A549 (cell line): ENCODE measurements at regions of chr2 and their contacts with region 1.

Region 1: DNA sequence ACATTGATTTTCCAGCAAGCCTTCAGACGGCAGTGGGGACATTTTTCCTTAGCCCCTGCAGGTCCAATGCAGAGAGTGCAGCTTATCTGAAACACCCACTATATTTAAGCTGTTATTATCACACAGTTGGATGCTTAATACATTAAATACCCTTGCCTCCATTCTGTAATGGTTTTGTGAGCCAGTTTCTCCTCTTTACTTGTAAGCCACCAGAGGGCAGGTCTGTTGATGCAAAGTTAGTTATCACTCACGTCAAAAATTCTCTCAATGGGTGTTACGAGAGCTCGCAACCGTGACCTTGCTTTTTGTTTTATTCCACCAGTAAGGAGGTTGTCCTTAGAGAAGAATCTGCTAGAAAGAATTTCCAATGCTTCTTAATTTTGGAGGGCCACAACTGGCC is 189.8 kb downstream of the INSIG2 start:
- DNase-seq: peak in 1 of 2 experiments; percentile 3
- ATAC-seq: no peak
- H3K4me3 ChIP-seq: no peak overlapping the region
- H3K27ac ChIP-seq: no peak overlapping the region
- H3K4me1 ChIP-seq: no peaks in the 10 kb centered on the region
- CTCF ChIP-seq: no peak
- EP300 ChIP-seq: no peak
- POLR2A ChIP-seq: no peak
- RAD21 ChIP-seq: no peak

Region 2: GRCh38 chr2:119678998-119679710 is 1401.1 kb after region 1 on chr2 and contains the start of gene TMEM177:
- CTCF ChIA-PET with region 1: no interaction called
- POLR2A ChIA-PET with region 1: interaction called, 11 read pairs
- DNase-seq: peak; percentile 88 to 93
- ATAC-seq: peak; percentile 92 to 96
- H3K4me3 ChIP-seq: peak within 1 kb of the TSS; percentile 88
- H3K27ac ChIP-seq: peak within 1 kb of the TSS; percentile 88 to 92
- H3K4me1 ChIP-seq: peaks cover 13% of the 10 kb centered on the region
- CTCF ChIP-seq: no peak
- EP300 ChIP-seq: no peak
- POLR2A ChIP-seq: peak; percentile 93
- RAD21 ChIP-seq: no peak
- polyA plus RNA-seq, gene TMEM177: 20.2 and 21.1 TPM in 2 replicates